Endothelial cell of umbilical vein (primary cell): ENCODE measurements at regions of chr1 and their contacts with region 1.

Region 1: DNA sequence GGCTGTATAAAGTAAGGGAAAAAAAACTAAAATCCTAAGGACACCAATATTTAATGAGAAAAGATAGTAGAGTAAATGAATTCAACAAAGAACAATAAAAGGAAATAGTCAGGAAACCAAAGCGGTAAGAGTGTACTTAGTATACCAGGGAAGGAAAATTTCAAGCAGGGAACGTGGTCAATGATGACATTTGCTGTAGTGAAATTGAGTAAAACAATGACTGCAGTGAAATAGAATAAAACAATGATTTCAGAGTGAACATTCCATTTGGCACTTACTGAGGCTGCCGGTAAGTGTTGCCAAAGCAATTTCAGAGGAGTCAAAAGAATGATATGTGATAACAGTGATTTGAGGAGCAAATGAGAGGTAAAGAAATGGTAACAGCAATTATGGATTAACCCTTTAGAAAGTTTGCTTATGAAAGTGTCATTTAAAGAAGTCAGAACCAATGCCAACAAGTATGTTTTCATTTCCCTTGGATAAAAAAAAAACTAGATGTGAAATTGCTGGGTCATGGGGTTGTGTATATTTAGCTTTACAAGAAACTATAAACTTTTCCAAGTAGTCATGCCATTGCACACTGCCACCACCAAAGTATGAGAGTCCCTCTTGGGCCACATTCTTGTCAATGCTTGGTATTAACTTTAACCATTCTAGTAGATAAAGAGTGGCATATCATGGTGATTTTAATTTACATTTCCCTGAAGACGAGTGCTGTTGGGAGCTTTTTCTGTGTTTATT is 50.5 kb downstream of the VCAM1 start:
- DNase-seq: peak; percentile 88
- H3K4me3 ChIP-seq: peak overlapping the region in 1 of 3 experiments; percentile 28
- H3K27ac ChIP-seq: peak overlapping the region; percentile 78
- H3K4me1 ChIP-seq: peaks cover 33% of the 10 kb centered on the region
- H3K27me3 ChIP-seq: no peaks in the 10 kb centered on the region
- CTCF ChIP-seq: no peak
- POLR2A ChIP-seq: no peak

Region 2: DNA sequence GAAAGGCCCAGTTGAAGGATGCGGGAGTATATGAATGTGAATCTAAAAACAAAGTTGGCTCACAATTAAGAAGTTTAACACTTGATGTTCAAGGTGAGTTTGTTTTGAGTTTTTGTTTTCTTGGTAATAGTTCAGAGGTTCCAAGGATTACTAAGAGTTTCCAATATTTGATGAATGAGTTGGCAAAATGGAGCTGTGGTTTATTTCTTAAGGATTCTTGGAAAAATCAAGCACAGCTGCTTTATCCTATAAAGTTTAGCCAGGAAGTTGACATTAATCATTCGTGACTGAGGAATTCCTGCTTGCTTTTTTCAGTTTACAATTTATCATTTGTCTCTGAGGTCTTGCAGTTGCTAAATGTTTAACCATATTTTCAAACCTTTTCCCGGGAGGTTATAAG is 35.4 kb before region 1 on chr1:
- CTCF ChIA-PET with region 1: no interaction called
- POLR2A ChIA-PET with region 1: no interaction called
- dilution Hi-C with region 1: no loop called
- intact Hi-C with region 1: loop called (anchors 5 kb)
- DNase-seq: peak; percentile 89
- H3K4me3 ChIP-seq: no peak overlapping the region
- H3K27ac ChIP-seq: peak overlapping the region; percentile 45
- H3K4me1 ChIP-seq: peaks cover 9% of the 10 kb centered on the region
- H3K27me3 ChIP-seq: no peaks in the 10 kb centered on the region
- CTCF ChIP-seq: no peak
- POLR2A ChIP-seq: no peak

Region 3: DNA sequence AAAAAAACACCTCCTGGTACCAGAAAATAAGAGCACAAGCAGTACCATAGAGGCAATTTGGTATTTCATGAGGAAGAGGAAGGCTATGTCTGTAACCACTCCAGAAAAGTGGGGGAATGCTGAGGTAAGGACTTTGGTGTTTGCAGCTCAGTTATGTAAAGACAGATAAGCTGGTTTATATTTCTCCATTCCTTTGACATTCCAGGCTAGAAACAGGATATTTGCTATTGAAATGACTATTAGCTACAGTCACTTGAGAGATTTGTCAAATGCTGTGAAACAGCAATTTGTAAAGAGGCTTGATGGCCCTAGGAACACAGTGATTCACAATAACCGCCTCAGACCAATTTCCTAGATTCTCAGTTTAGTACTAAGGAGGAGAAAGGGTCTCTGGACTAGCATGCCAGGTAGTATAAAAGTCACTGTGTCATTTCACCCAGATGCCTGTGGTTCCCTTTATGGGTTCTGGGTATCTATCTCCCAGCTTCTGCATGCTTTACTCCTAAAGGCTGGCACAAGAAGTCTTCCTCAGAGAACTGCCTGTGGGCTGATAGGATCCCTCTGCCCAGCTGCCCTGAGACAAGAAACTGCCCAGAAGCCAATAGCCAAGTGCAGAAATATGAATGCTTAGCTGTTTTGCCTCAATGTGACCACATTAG is 30.0 kb after region 1 on chr1:
- CTCF ChIA-PET with region 1: no interaction called
- POLR2A ChIA-PET with region 1: no interaction called
- dilution Hi-C with region 1: no loop called
- intact Hi-C with region 1: loop called (anchors 1 kb)
- DNase-seq: no peak
- H3K4me3 ChIP-seq: no peak overlapping the region
- H3K27ac ChIP-seq: peak overlapping the region; percentile 92
- H3K4me1 ChIP-seq: peaks cover 23% of the 10 kb centered on the region
- H3K27me3 ChIP-seq: no peaks in the 10 kb centered on the region
- CTCF ChIP-seq: no peak
- POLR2A ChIP-seq: no peak